Activated CD8-positive, alpha-beta T cell treated with anti-CD3 and anti-CD28 coated beads for 36 hours (primary cell): ENCODE measurements at regions of chr19 and their contacts with region 1.

Region 1: GRCh38 chr19:35495107-35496064 is 5.1 kb upstream of the KRTDAP start:
- DNase-seq: peak; percentile 84
- ATAC-seq: peak; percentile 100
- H3K4me3 Mint-ChIP-seq: no peak overlapping the region
- H3K27ac Mint-ChIP-seq: no peak overlapping the region
- H3K4me1 Mint-ChIP-seq: peaks cover 8% of the 10 kb centered on the region
- H3K27me3 Mint-ChIP-seq: peaks cover 5% of the 10 kb centered on the region
- CTCF ChIP-seq: peak; percentile 98

Region 2: DNA sequence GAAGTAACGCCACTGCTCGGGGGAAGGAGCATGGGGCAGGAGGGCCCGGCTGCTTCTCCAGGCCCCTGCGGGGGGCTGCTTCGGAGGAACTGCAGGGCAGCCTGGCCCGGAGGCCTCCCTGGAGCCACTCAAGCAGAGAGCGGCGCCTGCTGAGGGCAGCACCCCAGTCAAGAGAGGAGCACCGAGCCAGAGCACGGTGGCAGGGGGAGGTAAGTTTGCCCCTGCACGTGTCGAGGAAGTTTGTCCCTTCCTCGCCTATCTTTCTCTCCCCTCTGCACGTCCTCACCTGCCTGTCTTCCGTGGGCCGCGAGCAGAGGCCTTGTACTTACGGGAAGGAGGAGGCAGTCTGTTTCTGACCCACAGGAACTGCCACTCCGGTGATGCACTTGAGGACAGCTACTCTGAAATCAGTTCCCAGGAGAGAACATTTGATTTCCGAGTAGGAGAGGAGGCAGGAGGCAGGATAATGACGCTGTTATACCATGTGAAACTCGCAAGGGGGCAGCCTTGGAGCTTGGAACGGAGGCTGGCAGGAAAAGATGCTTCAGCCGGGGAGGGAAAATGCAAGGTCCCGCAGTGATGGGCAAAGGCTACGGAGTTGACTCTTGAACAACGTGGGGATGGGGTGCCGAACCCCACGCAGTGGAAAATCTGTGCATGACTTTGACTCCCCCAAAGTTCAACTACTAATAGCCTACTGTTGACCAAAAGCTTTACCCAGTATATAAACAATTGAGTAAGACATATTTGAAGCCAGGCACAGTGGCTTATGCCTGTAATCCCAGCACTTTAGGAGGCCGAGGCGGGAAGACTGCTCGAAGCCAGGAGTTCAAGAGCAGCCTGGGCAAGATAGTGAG is 142.7 kb before region 1 on chr19:
- CTCF ChIA-PET with region 1: interaction called, 45 read pairs
- POLR2A ChIA-PET with region 1: interaction called, 4 read pairs
- intact Hi-C with region 1: loop called (anchors 2 kb)
- DNase-seq: peak; percentile 82
- ATAC-seq: peak; percentile 87
- H3K4me3 Mint-ChIP-seq: no peak overlapping the region
- H3K27ac Mint-ChIP-seq: no peak overlapping the region
- H3K4me1 Mint-ChIP-seq: peaks cover 16% of the 10 kb centered on the region
- H3K27me3 Mint-ChIP-seq: peaks cover 2% of the 10 kb centered on the region
- CTCF ChIP-seq: peak; percentile 95

Region 3: DNA sequence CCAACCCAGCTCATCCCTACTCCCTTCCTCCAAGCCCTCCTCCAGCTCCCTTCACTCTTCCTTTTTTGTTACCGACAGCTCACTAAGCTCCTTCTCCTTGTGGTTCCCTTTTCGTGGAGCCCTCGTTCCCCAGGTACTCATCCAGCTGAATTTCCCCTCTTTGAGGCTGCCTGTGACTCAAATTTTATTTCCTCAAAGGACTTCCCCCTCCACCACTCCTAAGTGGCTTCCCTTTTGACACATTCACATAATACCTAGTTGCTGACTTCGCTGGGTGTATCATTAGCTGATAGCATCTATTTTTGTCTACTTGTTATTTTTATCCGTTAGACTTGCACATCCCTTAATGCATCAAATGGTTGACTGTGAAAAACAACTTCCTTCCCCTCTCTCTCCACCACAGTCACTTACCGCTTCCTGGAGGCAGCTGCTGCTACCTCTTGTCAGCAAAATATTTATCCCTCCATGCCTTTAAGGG is 32.9 kb before region 1 on chr19:
- CTCF ChIA-PET with region 1: interaction called, 13 read pairs
- POLR2A ChIA-PET with region 1: no interaction called
- intact Hi-C with region 1: no loop called
- DNase-seq: peak; percentile 64
- ATAC-seq: peak; percentile 91
- H3K4me3 Mint-ChIP-seq: peak overlapping the region; percentile 13
- H3K27ac Mint-ChIP-seq: peak overlapping the region; percentile 82
- H3K4me1 Mint-ChIP-seq: peaks cover 24% of the 10 kb centered on the region
- H3K27me3 Mint-ChIP-seq: no peaks in the 10 kb centered on the region
- CTCF ChIP-seq: no peak

Region 4: DNA sequence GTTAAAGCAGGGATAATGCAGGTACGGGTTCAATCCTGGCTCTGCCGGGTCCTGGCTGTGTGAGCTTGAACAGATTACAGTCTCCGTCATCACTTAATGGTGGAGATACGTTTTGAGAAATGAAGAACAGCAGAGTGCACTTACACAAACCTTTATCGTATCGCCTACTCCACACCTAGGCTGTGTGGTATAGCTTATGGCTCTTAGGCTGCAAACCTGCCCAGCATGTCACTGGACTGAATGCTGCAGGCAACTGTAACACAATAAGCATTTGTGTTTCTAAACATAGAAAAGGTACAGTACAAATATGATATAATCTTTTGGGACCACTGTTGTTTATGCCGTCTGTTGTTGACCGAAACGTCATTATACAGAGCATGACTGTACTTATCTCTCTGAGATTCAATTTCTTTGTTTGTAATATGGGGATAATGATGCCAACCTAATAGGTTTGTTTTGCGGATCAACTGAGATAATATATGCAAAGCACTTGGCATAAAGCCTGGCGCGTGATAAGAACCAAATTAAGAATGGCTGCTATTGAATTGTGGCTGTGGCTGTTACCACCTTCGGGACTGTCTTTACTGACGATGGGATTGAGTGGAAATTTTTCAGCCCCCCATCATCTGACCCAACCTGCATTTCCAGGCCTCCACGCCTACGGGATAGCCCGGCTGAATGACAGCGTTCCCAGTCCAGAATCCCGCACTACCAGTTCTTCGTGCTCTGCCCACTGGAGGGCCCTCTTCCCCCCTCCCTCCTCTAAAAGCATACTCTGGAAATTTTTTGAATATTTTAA is 16.4 kb before region 1 on chr19:
- CTCF ChIA-PET with region 1: interaction called, 29 read pairs
- POLR2A ChIA-PET with region 1: no interaction called
- intact Hi-C with region 1: no loop called
- DNase-seq: no peak
- ATAC-seq: no peak
- H3K4me3 Mint-ChIP-seq: no peak overlapping the region
- H3K27ac Mint-ChIP-seq: no peak overlapping the region
- H3K4me1 Mint-ChIP-seq: no peaks in the 10 kb centered on the region
- H3K27me3 Mint-ChIP-seq: no peaks in the 10 kb centered on the region
- CTCF ChIP-seq: no peak

Region 5: DNA sequence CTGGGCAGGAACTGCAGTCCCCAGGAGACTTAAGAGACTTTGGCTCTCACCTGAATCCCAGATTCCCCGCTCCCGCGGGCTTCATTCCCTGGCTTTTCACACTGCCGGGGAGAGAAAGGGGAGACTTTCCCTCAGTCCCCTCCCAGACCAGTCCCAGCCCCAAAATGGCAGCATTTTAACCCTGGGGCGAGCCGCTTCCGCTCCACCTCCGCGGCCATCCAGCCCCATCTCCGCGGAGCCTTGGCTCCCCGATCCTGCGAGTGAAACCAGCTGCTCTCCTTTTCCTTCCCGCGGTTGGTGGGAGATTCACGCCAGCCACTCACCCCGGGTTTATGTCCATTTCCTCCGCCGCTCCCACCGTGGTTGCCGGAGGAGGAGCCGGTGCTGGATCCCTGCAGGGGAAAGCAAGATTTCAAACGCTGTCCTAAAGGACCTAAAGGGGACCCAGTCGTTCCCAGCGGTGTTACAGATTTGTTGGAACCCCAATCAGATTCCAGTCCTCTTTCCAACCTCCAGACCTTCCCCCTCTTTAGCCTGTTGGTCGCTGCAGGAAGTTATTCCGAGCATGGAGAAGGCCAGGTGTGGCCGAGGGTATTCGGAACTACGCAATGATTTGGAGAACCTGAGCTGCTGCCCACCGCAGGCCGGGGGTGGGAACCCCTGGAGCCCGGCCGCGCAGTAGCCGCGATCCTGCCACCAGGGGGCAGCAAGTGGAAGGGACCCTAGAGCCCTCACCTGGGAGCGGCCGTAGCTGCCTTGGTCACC is 14.7 kb after region 1 on chr19:
- CTCF ChIA-PET with region 1: interaction called, 45 read pairs
- POLR2A ChIA-PET with region 1: interaction called, 3 read pairs
- intact Hi-C with region 1: no loop called
- DNase-seq: peak; percentile 83
- ATAC-seq: peak; percentile 80
- H3K4me3 Mint-ChIP-seq: peak overlapping the region; percentile 45
- H3K27ac Mint-ChIP-seq: no peak overlapping the region
- H3K4me1 Mint-ChIP-seq: peaks cover 14% of the 10 kb centered on the region
- H3K27me3 Mint-ChIP-seq: peaks cover 35% of the 10 kb centered on the region
- CTCF ChIP-seq: peak; percentile 97